Dendritic cell treated with granulocyte-macrophage colony-stimulating factor and Interleukin-4, amounts not matched to agents 40 ng/mL and 50 ng/mL, for 4 days (primary cell): ENCODE measurements at regions of chr15 and their contacts with region 1.

Region 1: GRCh38 chr15:78072080-78072892 is 5.2 kb downstream of the TBC1D2B start:
- H3K4me3 Mint-ChIP-seq: peak overlapping the region; percentile 67
- H3K27ac Mint-ChIP-seq: no peak overlapping the region
- H3K4me1 Mint-ChIP-seq: peaks cover 69% of the 10 kb centered on the region
- H3K27me3 Mint-ChIP-seq: no peaks in the 10 kb centered on the region

Region 2: DNA sequence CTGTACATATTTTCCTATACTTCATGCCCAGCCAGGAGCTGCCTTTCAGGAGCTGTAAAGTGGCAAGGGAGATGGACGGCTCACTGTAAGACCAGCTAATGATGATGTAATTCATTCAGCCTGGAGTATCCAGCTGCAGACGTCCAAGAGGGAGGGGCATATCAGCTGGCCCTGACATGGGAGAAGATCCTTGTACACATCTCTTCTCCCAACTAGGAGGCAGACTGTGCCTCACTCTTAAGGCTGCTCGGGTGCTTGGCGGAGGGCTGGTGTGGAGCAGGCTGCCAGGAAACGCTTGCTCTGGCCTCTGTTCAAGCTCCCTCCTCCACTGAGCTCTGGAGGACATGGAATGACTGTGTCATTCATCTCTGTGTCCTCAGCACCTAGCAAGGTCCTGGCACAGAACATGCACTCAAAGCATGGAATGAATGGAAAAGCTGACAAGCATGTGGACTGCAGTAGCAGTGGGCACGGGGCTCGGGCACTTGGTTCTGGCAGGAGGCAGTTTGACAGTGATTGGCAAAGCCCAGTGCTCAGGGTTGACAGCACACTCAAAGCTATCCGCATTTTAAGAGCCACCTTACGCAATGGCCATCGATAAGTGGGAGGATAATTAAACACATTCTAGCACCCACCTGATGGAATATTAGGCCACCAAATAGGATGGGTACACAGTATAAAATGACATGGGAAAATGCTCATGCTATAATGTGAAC is 67.2 kb before region 1 on chr15:
- intact Hi-C with region 1: no loop called
- H3K4me3 Mint-ChIP-seq: no peak overlapping the region
- H3K27ac Mint-ChIP-seq: no peak overlapping the region
- H3K4me1 Mint-ChIP-seq: peaks cover 28% of the 10 kb centered on the region
- H3K27me3 Mint-ChIP-seq: no peaks in the 10 kb centered on the region

Region 3: DNA sequence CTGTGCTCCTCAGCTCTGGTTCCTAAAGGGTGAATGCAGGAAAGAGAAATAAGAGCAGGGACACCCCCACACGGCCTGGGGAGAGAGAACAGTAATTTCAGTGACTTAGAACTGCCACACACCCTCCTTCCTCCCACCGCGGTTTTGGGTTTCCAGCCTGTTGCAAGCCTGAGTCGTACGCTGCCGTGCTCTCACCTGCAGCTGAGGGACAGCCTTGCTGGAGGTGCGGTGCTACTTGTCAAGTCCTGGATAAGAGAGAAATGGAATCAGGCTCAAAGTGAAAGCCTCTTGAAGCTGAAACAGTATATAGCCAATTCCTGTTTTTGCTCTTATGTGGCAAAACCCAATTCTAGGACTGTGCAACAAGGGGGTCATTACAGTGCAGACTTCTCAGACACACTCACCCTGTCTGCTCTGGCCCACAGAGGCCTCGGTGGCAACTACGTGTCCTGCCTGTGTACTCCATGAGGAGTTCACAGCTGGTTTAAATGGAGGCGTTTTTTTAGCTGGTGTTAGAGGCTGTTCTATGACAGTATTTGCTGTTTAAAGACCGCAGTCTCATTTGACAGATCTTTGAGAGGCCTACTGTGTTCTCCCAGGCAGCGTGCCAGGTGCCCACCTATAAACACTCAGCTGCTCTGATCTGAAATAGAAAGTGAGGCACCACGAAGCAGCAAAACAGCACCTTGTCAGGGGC is 37.6 kb before region 1 on chr15:
- intact Hi-C with region 1: loop called (anchors 5 kb)
- H3K4me3 Mint-ChIP-seq: peak overlapping the region; percentile 57
- H3K27ac Mint-ChIP-seq: peak overlapping the region; percentile 86
- H3K4me1 Mint-ChIP-seq: peaks cover 75% of the 10 kb centered on the region
- H3K27me3 Mint-ChIP-seq: no peaks in the 10 kb centered on the region

Region 4: DNA sequence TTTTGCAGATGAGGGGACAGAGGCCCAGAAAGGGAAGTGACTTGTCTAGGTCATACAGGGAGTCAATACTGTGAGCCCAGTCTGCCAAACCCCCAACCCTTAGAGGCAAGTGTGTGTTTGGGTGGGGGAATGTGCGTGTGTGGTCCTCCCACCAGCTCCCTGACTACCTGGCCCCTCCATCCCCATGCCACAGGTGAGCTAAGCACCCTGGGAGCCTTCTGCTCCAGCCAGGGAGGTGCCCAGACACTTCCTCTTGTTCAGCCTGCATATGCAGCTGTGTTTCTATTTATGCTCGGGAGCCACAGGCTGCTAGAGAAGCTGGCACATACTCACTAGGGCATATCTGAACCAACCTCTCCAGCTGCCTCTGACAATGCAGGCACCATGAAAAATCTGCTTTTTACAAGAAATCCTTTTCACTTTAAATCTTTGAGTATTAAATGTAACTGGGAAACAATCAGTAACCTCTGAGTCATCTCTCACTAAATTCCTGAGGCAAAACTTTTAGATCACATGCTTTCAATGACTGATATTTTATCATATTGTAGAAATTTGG is 15.5 kb before region 1 on chr15:
- intact Hi-C with region 1: no loop called
- H3K4me3 Mint-ChIP-seq: peak overlapping the region; percentile 7
- H3K27ac Mint-ChIP-seq: peak overlapping the region; percentile 89
- H3K4me1 Mint-ChIP-seq: peaks cover 80% of the 10 kb centered on the region
- H3K27me3 Mint-ChIP-seq: no peaks in the 10 kb centered on the region

Region 5: GRCh38 chr15:78308422-78309032 is 236.2 kb after region 1 on chr15:
- intact Hi-C with region 1: no loop called
- H3K4me3 Mint-ChIP-seq: peak overlapping the region; percentile 45
- H3K27ac Mint-ChIP-seq: peak overlapping the region; percentile 80
- H3K4me1 Mint-ChIP-seq: peaks cover 16% of the 10 kb centered on the region
- H3K27me3 Mint-ChIP-seq: no peaks in the 10 kb centered on the region